Activated CD8-positive, alpha-beta T cell treated with anti-CD3 and anti-CD28 coated beads, Interleukin-2, amount 10 ng/mL, durations not matched to agents 7 days and 5 days (primary cell): ENCODE measurements at regions of chr7 and their contacts with region 1.

Region 1: GRCh38 chr7:44638611-44639557 is 32.5 kb downstream of the OGDH start:
- DNase-seq: peak; percentile 92
- ATAC-seq: peak; percentile 87
- H3K4me3 Mint-ChIP-seq: peak overlapping the region; percentile 77
- H3K27ac Mint-ChIP-seq: peak overlapping the region; percentile 100
- H3K4me1 Mint-ChIP-seq: peaks cover 79% of the 10 kb centered on the region
- H3K27me3 Mint-ChIP-seq: no peaks in the 10 kb centered on the region

Region 2: GRCh38 chr7:44581879-44582603 is 56.8 kb before region 1 on chr7 and contains the start of gene TMED4:
- CTCF ChIA-PET with region 1: interaction called, 3 read pairs
- POLR2A ChIA-PET with region 1: interaction called, 19 read pairs
- DNase-seq: peak; percentile 100
- ATAC-seq: peak; percentile 95
- H3K4me3 Mint-ChIP-seq: peak within 1 kb of the TSS; percentile 93
- H3K27ac Mint-ChIP-seq: peak within 1 kb of the TSS; percentile 91
- H3K4me1 Mint-ChIP-seq: peaks cover 38% of the 10 kb centered on the region
- H3K27me3 Mint-ChIP-seq: peaks cover 3% of the 10 kb centered on the region
- total RNA-seq, gene TMED4: 63.8 to 65.9 TPM

Region 3: DNA sequence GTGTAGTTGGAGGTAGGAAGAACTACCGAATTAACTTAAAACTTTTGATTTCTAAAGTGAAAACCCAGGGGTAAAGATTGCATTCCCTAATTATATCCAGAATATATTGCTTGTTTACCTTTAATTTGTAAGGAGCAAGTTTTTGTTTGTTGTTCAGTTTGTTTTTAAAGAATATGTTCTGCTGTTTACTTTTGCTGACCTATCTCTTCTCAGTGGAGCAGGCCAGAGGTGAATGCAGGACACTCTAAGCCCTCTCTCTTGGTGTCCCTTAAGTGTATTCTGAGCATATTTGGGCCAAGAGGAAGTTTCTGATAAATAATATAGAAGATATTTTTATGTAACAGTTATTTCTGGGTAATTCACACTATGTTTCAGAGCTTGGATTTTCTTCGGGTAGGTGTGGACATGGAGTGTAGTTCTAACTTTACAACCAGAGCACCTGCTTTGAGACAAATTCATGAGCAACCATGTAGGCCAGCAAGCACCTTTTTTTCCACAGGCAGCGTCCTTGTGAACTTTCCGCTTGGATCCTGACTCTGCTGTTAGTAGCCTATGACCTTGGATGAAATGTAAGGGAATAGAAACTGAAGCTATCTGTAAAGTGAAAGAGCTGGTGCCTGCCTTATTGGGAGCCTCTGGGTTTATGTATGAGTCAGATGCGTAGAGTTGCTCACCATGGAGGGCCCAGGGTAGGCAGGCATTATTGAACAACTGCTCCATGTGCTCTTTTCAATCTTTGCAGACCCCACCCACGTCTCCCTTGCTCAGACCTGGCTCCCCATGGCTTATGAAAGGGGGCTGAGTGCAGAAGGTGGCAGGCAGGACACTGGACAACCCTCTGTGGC is 16.4 kb before region 1 on chr7:
- CTCF ChIA-PET with region 1: interaction called, 27 read pairs
- POLR2A ChIA-PET with region 1: interaction called, 33 read pairs
- DNase-seq: peak; percentile 51
- ATAC-seq: peak; percentile 75
- H3K4me3 Mint-ChIP-seq: peak overlapping the region; percentile 19
- H3K27ac Mint-ChIP-seq: peak overlapping the region; percentile 82
- H3K4me1 Mint-ChIP-seq: peaks cover 87% of the 10 kb centered on the region
- H3K27me3 Mint-ChIP-seq: no peaks in the 10 kb centered on the region

Region 4: GRCh38 chr7:44797329-44798251 is 158.7 kb after region 1 on chr7:
- CTCF ChIA-PET with region 1: interaction called, 4 read pairs
- POLR2A ChIA-PET with region 1: interaction called, 12 read pairs
- DNase-seq: peak; percentile 91
- ATAC-seq: peak; percentile 54
- H3K4me3 Mint-ChIP-seq: peak overlapping the region; percentile 94
- H3K27ac Mint-ChIP-seq: peak overlapping the region; percentile 98
- H3K4me1 Mint-ChIP-seq: peaks cover 36% of the 10 kb centered on the region
- H3K27me3 Mint-ChIP-seq: no peaks in the 10 kb centered on the region